ENCODE measurements at regions of chr7 and their contacts with region 1.

Region 1: GRCh38 chr7:43625453-43625852 is 42.5 kb downstream of the STK17A start:
- DNase-seq: peak; percentile 25 to 94 (median 61)
- ATAC-seq: peak; percentile 74
- H3K4me3 ChIP-seq: no peak overlapping the region
- H3K4me3 Mint-ChIP-seq: peak overlapping the region; percentile 71
- H3K27ac ChIP-seq: peak overlapping the region; percentile 23 to 75
- H3K27ac Mint-ChIP-seq: peak overlapping the region; percentile 94
- H3K4me1 ChIP-seq: peaks cover 94% of the 10 kb centered on the region
- H3K4me1 Mint-ChIP-seq: peaks cover 94% of the 10 kb centered on the region
- H3K27me3 ChIP-seq: no peaks in the 10 kb centered on the region
- H3K27me3 Mint-ChIP-seq: no peaks in the 10 kb centered on the region
- CTCF ChIP-seq: no peak

Region 2: DNA sequence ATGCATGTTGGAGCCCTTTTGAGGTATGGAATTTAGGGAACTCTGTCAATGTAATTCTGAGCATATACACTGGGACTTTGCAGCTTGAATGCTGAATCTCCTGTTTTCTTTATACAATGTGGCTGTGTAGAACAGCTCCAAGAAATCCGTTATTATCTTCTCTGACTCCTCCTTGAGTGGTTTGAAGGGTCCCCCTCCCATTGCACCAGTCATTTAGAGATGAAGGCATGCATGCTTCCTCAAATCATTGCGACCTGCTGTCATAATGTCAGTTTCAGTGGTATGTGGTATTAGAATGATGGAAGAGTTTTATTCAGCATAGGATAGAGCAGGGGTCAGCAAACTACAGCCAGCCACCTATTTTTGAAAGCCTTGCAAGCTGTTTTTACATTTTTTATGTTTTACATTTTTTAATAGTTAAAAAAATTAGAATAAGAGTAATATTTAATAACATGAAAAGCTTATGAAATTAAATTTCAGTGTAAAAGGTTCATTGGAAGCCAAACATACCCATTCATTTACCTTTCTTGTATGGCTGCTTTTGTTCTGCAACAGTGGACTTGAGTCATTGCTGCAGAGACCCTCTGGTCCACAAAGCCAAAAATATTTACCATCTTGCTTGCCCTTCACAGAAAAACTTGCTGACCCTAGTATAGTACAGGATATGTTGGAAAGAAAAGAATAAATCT is 34.4 kb before region 1 on chr7:
- CTCF ChIA-PET with region 1: interaction called, 59 read pairs
- POLR2A ChIA-PET with region 1: interaction called, 7 read pairs
- intact Hi-C with region 1: loop called in 1 of 2 experiments (anchors 5 kb)
- DNase-seq: peak in 1 of 9 experiments; percentile 43
- ATAC-seq: no peak
- H3K4me3 ChIP-seq: peak overlapping the region; percentile 12 to 21
- H3K4me3 Mint-ChIP-seq: peak overlapping the region; percentile 75
- H3K27ac ChIP-seq: peak overlapping the region; percentile 36 to 97
- H3K27ac Mint-ChIP-seq: peak overlapping the region; percentile 83
- H3K4me1 ChIP-seq: peaks cover 82% of the 10 kb centered on the region
- H3K4me1 Mint-ChIP-seq: peaks cover 80% of the 10 kb centered on the region
- H3K27me3 ChIP-seq: no peaks in the 10 kb centered on the region
- H3K27me3 Mint-ChIP-seq: no peaks in the 10 kb centered on the region
- CTCF ChIP-seq: no peak

Region 3: GRCh38 chr7:43612599-43613589 is 12.6 kb before region 1 on chr7:
- CTCF ChIA-PET with region 1: interaction called, 5 read pairs
- POLR2A ChIA-PET with region 1: interaction called, 5 read pairs
- intact Hi-C with region 1: loop called in 1 of 2 experiments (anchors 1 kb)
- DNase-seq: peak in 1 of 9 experiments; percentile 37
- ATAC-seq: peak; percentile 39
- H3K4me3 ChIP-seq: no peak overlapping the region
- H3K4me3 Mint-ChIP-seq: peak overlapping the region; percentile 40
- H3K27ac ChIP-seq: peak overlapping the region in 1 of 2 experiments; percentile 39
- H3K27ac Mint-ChIP-seq: peak overlapping the region; percentile 88
- H3K4me1 ChIP-seq: peaks cover 87% of the 10 kb centered on the region
- H3K4me1 Mint-ChIP-seq: peaks cover 72% of the 10 kb centered on the region
- H3K27me3 ChIP-seq: no peaks in the 10 kb centered on the region
- H3K27me3 Mint-ChIP-seq: no peaks in the 10 kb centered on the region
- CTCF ChIP-seq: no peak

Region 4: DNA sequence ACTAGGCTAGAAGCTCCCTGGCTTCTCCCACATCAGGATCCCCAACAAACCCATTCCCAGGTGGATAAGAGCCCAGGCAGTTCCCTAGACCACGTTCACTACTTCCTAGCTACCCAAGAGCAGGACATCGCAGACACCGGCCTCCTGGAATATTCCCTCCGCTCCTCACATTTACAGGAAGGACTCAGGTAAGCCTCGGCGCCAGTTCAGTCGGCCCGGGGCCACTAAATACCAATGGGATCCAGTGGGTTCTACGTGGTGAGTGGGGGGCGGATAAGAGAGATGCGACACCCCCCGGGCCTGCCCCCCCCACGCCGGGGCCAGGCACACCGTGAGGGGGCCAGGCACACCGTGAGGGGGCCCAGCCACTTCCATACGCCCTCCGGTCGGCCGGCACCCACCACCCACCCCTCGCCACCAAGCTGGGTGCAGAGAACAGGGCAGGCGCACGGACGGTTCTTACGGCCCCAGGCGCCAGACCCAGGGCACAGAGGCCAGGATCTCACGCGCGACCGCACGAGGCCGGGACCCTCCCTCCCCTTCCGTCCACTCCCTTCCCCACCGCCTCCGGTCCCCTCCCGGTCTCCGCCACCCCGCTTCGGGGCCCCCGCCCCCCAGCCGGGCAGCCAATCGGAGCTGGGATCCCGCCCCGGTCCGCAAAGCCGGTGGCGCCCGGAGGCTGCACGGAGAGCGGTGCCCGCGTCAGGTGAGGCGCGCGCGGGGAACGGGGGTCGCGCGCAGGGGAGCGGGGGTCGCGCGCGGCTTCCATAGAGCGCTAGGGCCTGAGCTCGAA is 132.8 kb after region 1 on chr7 and contains the start of gene BLVRA:
- CTCF ChIA-PET with region 1: no interaction called
- POLR2A ChIA-PET with region 1: no interaction called
- intact Hi-C with region 1: no loop called
- DNase-seq: peak; percentile 30 to 76 (median 63)
- ATAC-seq: peak; percentile 72
- H3K4me3 ChIP-seq: peak within 1 kb of the TSS; percentile 62 to 90
- H3K4me3 Mint-ChIP-seq: peak within 1 kb of the TSS; percentile 90
- H3K27ac ChIP-seq: peak within 1 kb of the TSS; percentile 18 to 74
- H3K27ac Mint-ChIP-seq: peak within 1 kb of the TSS; percentile 80
- H3K4me1 ChIP-seq: peaks cover 15% of the 10 kb centered on the region
- H3K4me1 Mint-ChIP-seq: peaks cover 27% of the 10 kb centered on the region
- H3K27me3 ChIP-seq: no peaks in the 10 kb centered on the region
- H3K27me3 Mint-ChIP-seq: no peaks in the 10 kb centered on the region
- CTCF ChIP-seq: no peak
- total RNA-seq, gene BLVRA: 12.8 to 14.6 TPM